ENCODE measurements at regions of chr9 and their contacts with region 1.

Region 1: GRCh38 chr9:15211160-15211814 is 95.7 kb downstream of the TTC39B start:
- DNase-seq: peak; percentile 52 to 72
- H3K4me3 ChIP-seq: no peak overlapping the region
- H3K27ac ChIP-seq: peak overlapping the region; percentile 23 to 28
- H3K4me1 ChIP-seq: no peaks in the 10 kb centered on the region
- H3K27me3 ChIP-seq: no peaks in the 10 kb centered on the region
- CTCF ChIP-seq: peak; percentile 83 to 90 (median 88)
- POLR2A ChIP-seq: no peak

Region 2: DNA sequence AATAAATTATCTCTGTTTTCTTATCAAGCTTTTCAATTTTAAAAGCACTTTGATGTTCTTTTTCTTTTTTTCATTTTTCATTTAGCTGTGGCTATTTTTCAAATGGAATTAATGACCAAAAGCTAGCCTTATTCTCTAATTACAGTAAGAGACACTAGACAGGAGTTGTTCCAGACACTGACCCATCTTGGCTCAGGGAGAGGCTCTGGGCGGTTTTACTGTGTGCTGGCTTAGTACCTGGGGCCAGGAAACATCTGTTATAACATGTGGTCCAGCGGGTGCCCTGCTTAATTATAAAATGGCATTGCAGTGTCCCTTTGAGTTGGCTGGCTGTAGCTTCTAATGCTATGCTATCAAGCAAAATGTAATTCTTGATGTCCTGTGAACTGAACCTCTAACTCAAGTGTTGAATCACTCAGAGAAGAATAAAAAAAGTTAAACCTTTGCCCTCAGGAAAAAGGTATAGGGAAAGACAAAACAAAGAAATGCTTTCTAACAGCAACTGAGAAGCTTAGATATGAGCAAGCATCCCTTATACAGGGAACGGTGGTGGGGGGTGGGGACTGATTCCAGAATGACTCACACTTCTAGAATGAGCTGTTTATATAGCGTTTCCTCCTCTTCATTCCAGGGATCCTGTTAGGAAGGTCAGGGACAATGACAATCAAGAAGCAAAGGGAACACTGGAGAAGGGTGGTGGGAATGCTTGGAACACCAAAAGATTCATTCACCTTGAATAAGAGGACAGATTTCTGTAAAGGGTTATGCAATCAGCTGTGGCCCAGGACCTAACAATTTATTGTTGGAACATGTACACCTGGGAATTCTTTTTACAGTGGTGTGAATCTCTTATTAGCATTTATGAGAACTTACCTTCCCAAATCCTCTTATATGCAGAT is 838.6 kb before region 1 on chr9:
- intact Hi-C with region 1: no loop called
- DNase-seq: peak; percentile 40 to 76
- H3K4me3 ChIP-seq: no peak overlapping the region
- H3K27ac ChIP-seq: peak overlapping the region; percentile 56 to 71
- H3K4me1 ChIP-seq: no peaks in the 10 kb centered on the region
- H3K27me3 ChIP-seq: no peaks in the 10 kb centered on the region
- CTCF ChIP-seq: no peak
- POLR2A ChIP-seq: peak in 1 of 2 donors; percentile 12

Region 3: GRCh38 chr9:15306757-15307534 is 95.7 kb after region 1 on chr9 and contains the start of gene TTC39B:
- intact Hi-C with region 1: loop called (anchors 10 kb)
- DNase-seq: peak; percentile 93 to 96
- H3K4me3 ChIP-seq: peak within 1 kb of the TSS; percentile 84 to 86
- H3K27ac ChIP-seq: peak within 1 kb of the TSS; percentile 88 to 95
- H3K4me1 ChIP-seq: no peaks in the 10 kb centered on the region
- H3K27me3 ChIP-seq: no peaks in the 10 kb centered on the region
- CTCF ChIP-seq: peak; percentile 6 to 34 (median 22)
- POLR2A ChIP-seq: peak; percentile 78 to 79
- total RNA-seq, gene TTC39B: 14.1 to 21.9 (median 19.6) TPM

Region 4: DNA sequence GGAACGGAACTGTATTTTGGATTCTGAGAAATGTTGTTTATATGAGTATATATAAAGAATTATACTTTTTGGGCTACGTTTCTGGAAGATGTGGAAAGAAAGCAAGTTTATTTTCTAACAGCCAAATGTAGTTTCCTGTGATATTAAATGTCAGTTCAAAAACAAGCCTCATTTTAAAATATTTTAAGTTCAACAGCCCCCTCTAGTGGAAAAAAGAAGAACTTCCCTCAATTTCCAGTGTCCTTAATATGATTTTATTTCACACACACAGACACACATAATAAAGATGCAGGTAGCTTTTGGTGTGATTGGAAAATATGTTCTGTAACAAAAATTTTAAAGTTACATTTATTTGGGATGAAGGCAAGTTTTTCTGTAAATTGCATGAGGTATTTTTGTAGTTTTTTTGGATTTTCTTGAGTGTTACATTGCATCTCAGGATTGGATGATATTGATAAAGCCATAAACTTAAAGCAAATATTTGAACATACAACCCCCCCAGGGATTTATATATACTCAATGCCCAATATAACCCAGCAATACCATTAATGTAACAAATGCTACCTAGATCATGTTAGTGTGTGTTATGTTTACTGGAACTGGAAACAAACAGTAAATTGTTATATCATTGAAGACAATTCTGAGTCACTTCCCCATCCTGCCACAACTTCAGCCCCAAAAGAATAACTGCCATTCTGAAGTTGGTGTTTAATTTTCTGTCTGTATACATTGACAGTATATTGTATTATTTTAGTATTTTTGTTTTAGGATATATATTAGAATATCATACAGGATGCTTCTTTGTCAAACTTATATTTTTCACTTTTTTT is 395.6 kb after region 1 on chr9:
- intact Hi-C with region 1: loop called (anchors 5 kb)
- DNase-seq: no peak
- H3K4me3 ChIP-seq: no peak overlapping the region
- H3K27ac ChIP-seq: no peak overlapping the region
- H3K4me1 ChIP-seq: no peaks in the 10 kb centered on the region
- H3K27me3 ChIP-seq: no peaks in the 10 kb centered on the region
- CTCF ChIP-seq: peak; percentile 64 to 77 (median 72)
- POLR2A ChIP-seq: no peak

Measured in uterus (tissue), 4 donors.